WTC11 (cell line): ENCODE measurements at regions of chr9 and their contacts with region 1.

Region 1: DNA sequence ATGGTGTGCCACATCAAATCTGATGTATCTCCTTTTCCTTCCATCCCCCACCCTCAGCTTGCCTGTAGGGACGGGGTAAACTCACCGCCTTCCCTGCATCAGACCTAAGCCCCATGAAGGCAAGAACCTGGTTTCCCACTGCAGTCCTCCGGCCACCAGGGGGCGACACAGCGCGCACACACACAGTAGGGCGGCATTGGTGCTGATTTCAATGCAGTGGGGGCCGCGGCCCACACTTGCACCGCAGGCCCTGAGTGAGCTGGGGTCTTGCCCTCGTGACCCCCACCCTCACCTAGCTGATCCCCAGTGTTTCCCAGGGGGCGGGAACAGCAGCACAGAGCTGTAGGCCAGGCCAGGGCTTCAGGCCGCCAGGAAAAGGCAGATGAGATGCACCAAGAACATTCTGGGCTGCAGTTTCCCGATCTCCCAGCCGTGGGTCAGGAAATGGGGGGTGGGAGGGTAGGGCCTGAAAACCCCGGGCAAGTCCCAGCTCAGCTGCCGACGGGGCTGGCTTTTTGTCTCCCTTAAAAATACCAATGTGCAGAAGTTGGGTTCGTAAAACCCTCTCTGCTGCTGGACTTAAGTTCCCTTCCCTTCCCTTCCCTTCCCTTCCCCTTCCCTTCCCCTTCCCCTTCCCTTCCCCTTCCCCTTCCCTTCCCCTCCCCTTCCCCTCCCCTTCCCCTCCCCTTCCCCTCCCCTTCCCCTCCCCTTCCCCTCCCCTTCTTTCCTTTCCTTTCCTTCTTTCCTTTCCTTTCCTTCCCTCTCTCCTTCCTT is 19.5 kb downstream of the FAM163B start:
- DNase-seq: peak; percentile 79
- ATAC-seq: peak; percentile 78
- H3K4me3 Mint-ChIP-seq: no peak overlapping the region
- H3K27ac Mint-ChIP-seq: no peak overlapping the region
- H3K4me1 Mint-ChIP-seq: peaks cover 14% of the 10 kb centered on the region
- H3K27me3 Mint-ChIP-seq: peaks cover 6% of the 10 kb centered on the region; the same call in 1 of the 2 replicates
- CTCF ChIP-seq: peak; percentile 92

Region 2: DNA sequence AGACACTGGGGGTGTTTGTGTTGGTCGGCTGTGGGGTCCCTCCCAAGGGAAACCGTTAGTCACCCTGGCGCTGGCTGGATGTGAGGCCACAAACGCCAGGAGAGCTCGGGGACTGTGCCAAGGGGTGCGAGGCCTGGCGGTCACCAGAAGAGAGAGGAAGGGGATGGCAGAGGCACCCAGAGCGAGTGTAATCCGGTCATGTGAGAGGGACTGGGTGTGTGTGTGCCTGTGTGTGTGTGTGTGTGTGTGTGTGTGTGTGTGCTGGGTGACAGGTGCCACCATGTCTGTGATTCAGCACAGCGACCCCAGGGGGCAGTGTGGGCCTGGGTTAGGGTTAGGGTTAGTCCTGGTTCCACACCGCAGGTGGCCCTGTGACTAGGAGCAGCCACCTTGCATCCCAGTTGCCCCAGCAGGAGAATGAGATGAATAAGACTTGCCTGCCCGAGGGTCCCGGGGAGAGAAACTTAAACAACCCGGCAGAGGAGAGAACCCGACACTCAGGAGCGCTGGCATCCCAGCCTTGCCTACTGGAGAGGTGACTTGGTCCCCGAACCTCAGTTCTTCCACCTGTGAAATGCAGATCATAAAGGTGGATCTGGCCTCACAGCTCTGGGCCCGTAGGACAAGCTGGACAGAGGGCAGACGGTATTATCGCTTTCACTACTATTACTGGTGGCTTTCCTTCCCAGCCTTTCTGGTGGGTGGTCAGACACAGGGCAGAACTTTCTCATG is 56.5 kb before region 1 on chr9:
- CTCF ChIA-PET with region 1: interaction called, 11 read pairs
- POLR2A ChIA-PET with region 1: no interaction called
- DNase-seq: peak; percentile 89
- ATAC-seq: peak; percentile 31
- H3K4me3 Mint-ChIP-seq: peak overlapping the region; percentile 20
- H3K27ac Mint-ChIP-seq: no peak overlapping the region
- H3K4me1 Mint-ChIP-seq: peaks cover 23% of the 10 kb centered on the region
- H3K27me3 Mint-ChIP-seq: peaks cover 25% of the 10 kb centered on the region
- CTCF ChIP-seq: peak; percentile 57

Region 3: GRCh38 chr9:133603135-133603927 is 13.7 kb after region 1 on chr9:
- CTCF ChIA-PET with region 1: interaction called, 15 read pairs
- POLR2A ChIA-PET with region 1: no interaction called
- DNase-seq: no peak
- ATAC-seq: peak; percentile 49; the same call in 1 of the 2 replicates
- H3K4me3 Mint-ChIP-seq: no peak overlapping the region
- H3K27ac Mint-ChIP-seq: no peak overlapping the region
- H3K4me1 Mint-ChIP-seq: peaks cover 6% of the 10 kb centered on the region
- H3K27me3 Mint-ChIP-seq: peaks cover 12% of the 10 kb centered on the region
- CTCF ChIP-seq: no peak

Region 4: DNA sequence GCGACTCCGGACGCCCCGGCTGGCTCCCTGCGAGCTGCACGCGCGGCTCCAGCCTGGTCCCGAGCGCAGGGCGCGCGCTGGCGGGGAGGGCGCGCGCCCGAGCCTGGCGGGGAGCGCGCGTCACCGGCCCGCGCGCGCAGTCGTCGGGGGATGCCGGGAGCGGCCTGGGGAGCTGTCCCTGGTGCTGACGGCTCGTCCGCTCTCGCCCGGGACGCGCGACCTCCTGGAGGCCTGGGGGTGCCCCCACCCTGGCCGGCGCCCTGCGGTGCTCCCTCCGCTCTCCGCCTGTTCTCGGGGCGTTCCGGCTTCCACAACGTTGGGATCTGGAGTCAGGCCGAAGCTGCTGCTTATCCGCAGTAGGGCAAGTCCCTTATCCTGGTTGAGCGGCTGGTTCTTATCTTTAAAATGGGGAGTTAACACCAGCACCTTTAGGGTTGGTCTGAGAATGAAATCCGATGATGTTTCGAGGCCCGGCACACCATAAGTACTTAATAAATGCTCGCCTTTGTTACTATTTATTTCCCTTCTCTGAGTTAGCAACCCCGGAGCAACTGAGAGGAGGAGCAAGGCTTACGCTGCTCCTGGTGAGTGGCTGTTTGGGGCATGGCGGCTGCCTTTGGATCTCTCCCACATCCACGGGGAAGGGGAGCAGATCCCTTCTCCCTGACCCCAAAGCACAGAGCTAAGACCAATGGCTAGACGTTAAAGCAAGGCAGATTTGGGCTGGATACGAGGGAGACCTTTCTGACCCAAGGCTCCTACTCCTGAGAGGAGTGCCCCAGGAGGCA is 19.9 kb after region 1 on chr9 and contains the start of gene FAM163B:
- CTCF ChIA-PET with region 1: interaction called, 10 read pairs
- POLR2A ChIA-PET with region 1: no interaction called
- DNase-seq: peak; percentile 73
- ATAC-seq: peak; percentile 75
- H3K4me3 Mint-ChIP-seq: peak within 1 kb of the TSS; percentile 64
- H3K27ac Mint-ChIP-seq: no peak within 1 kb of the TSS; the same call in 1 of the 2 replicates
- H3K4me1 Mint-ChIP-seq: peaks cover 3% of the 10 kb centered on the region; the same call in 1 of the 2 replicates
- H3K27me3 Mint-ChIP-seq: peaks cover 35% of the 10 kb centered on the region
- CTCF ChIP-seq: no peak
- total RNA-seq, gene FAM163B: 2.0 to 3.1 TPM (median 2.7 TPM) in 3 replicates

Region 5: GRCh38 chr9:133715866-133716563 is 126.4 kb after region 1 on chr9:
- CTCF ChIA-PET with region 1: interaction called, 17 read pairs
- POLR2A ChIA-PET with region 1: no interaction called
- DNase-seq: peak; percentile 61
- ATAC-seq: peak; percentile 87
- H3K4me3 Mint-ChIP-seq: no peak overlapping the region
- H3K27ac Mint-ChIP-seq: peak overlapping the region; percentile 23; the same call in 1 of the 2 replicates
- H3K4me1 Mint-ChIP-seq: peaks cover 5% of the 10 kb centered on the region
- H3K27me3 Mint-ChIP-seq: no peaks in the 10 kb centered on the region
- CTCF ChIP-seq: peak; percentile 23; the same call in 1 of the 2 replicates

Region 6: GRCh38 chr9:133726401-133727276 is 137.0 kb after region 1 on chr9:
- CTCF ChIA-PET with region 1: interaction called, 11 read pairs
- POLR2A ChIA-PET with region 1: no interaction called
- DNase-seq: peak; percentile 71
- ATAC-seq: peak; percentile 79
- H3K4me3 Mint-ChIP-seq: no peak overlapping the region
- H3K27ac Mint-ChIP-seq: peak overlapping the region; percentile 20; the same call in 1 of the 2 replicates
- H3K4me1 Mint-ChIP-seq: no peaks in the 10 kb centered on the region
- H3K27me3 Mint-ChIP-seq: no peaks in the 10 kb centered on the region; the same call in 1 of the 2 replicates
- CTCF ChIP-seq: peak; percentile 29